Posterior vena cava (tissue), 2 donors: ENCODE measurements at regions of chr18 and their contacts with region 1.

Region 1: DNA sequence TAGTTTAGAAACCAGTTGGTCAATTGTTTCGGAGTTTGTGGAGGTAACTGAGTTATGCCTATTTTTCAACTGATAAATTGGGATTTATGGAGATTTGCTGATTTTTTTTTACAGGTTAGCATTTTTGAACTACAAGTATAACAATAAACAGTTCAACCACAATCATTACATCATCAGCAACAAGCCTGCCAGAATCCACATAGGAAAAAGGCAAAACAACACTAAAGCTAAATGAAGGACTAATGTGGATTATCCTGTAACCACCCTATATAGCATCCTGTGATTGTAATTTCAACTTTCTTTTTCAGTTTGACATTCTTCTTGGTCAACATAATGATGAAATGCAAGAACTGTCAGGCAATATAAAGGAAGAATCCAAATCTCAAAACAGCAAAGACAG is 76.5 kb downstream of the CCDC102B start:
- DNase-seq: no peak

Region 2: DNA sequence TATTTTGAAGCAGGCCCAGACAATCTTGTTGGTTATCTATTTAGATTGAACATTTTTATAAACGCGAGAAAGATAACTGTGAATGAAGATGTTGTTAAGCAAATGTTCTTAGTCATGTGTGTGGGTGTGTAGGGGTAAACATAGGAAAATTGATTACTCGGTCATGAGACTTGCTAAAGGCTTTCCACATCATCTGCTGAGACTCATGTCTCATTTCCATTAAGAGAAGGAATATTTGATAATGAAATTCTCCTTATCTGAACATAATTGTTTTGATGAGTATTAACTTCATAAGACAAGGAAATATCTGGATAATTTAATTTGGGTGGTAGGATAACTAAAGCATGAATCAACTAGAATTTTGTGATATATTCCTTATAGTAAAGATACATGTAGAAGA is 56.8 kb before region 1 on chr18:
- intact Hi-C with region 1: no loop called
- DNase-seq: no peak

Region 3: DNA sequence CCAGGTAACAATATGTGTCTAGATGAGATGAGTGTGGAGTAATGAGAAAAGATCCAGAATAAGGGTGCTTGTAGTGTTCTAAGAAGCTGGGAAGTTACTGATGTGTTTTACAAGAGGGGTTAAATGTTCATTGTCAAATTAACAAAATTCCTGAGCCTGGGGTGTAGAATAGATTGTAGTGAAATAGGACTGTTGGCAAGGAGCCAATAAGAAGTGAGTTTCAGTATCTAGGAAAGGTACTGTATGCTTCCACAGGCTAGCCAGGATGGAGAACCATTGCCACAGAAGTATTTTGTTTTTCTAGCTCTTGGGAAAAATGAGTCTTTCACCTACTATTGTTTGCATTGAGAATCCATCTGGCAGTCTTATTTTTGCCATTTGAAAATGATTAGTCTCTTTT is 536.8 kb after region 1 on chr18:
- intact Hi-C with region 1: loop called in 1 of 2 experiments (anchors 5 kb)
- DNase-seq: no peak

Region 4: GRCh38 chr18:69538849-69539248 is 664.5 kb after region 1 on chr18:
- intact Hi-C with region 1: no loop called
- DNase-seq: no peak